HAP-1 (cell line): ENCODE measurements at regions of chr11 and their contacts with region 1.

Region 1: GRCh38 chr11:10307442-10308207 is 2.8 kb downstream of the ADM start:
- DNase-seq: peak; percentile 75 to 87
- H3K4me3 ChIP-seq: peak overlapping the region; percentile 67
- H3K4me1 ChIP-seq: peaks cover 3% of the 10 kb centered on the region
- H3K27me3 ChIP-seq: no peaks in the 10 kb centered on the region

Region 2: GRCh38 chr11:9613118-9613829 is 694.4 kb before region 1 on chr11:
- in situ Hi-C with region 1: loop called (anchors 25 kb)
- DNase-seq: peak; percentile 97
- H3K4me3 ChIP-seq: peak overlapping the region; percentile 33
- H3K4me1 ChIP-seq: peaks cover 33% of the 10 kb centered on the region
- H3K27me3 ChIP-seq: no peaks in the 10 kb centered on the region

Region 3: GRCh38 chr11:9757809-9758636 is 549.6 kb before region 1 on chr11:
- in situ Hi-C with region 1: loop called (anchors 10 kb)
- DNase-seq: peak; percentile 66 to 94
- H3K4me3 ChIP-seq: peak overlapping the region; percentile 46
- H3K4me1 ChIP-seq: peaks cover 38% of the 10 kb centered on the region
- H3K27me3 ChIP-seq: no peaks in the 10 kb centered on the region

Region 4: GRCh38 chr11:9861860-9862725 is 445.5 kb before region 1 on chr11:
- in situ Hi-C with region 1: loop called (anchors 25 kb)
- DNase-seq: peak; percentile 73 to 79
- H3K4me3 ChIP-seq: no peak overlapping the region
- H3K4me1 ChIP-seq: peaks cover 12% of the 10 kb centered on the region
- H3K27me3 ChIP-seq: no peaks in the 10 kb centered on the region

Region 5: GRCh38 chr11:9982800-9983579 is 324.6 kb before region 1 on chr11:
- in situ Hi-C with region 1: loop called (anchors 25 kb)
- DNase-seq: peak; percentile 19 to 73
- H3K4me3 ChIP-seq: no peak overlapping the region
- H3K4me1 ChIP-seq: peaks cover 14% of the 10 kb centered on the region
- H3K27me3 ChIP-seq: no peaks in the 10 kb centered on the region